ENCODE measurements at regions of chr7 and their contacts with region 1.

Region 1: GRCh38 chr7:4641667-4642467 is 40.2 kb upstream of the FOXK1 start:
- DNase-seq: peak; percentile 97
- H3K4me3 Mint-ChIP-seq: peak overlapping the region; percentile 90
- H3K27ac Mint-ChIP-seq: peak overlapping the region; percentile 76
- H3K4me1 Mint-ChIP-seq: no peaks in the 10 kb centered on the region
- H3K27me3 Mint-ChIP-seq: no peaks in the 10 kb centered on the region
- CTCF ChIP-seq: peak; percentile 20

Region 2: DNA sequence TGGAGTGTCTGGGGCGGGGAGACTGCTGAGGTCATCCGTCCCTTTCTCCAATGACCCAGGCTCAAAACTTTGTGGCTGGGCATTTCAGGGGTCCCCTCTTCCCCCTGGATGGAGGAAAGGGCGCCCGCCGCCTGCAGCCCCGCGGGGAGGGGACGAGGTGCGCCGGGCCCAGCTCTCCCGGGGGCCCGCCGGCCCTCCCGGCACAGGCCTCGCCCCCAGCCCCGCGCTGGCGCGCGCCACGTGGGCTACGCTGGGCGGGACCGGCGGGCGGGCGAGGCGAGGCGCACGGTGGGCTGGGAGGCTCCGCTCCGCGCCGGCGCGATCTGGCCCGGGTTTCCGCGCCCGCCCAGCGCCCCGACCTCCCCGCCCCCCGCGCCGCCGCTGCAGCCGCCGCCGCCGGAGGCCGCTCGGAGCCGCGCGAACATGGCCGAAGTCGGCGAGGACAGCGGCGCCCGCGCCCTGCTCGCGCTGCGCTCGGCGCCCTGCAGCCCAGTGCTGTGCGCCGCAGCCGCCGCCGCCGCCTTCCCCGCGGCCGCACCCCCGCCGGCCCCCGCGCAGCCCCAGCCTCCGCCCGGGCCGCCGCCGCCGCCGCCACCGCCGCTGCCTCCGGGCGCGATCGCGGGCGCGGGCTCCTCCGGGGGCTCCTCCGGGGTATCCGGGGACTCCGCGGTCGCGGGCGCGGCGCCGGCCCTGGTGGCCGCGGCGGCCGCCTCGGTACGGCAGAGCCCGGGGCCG is 40.2 kb after region 1 on chr7 and contains the start of gene FOXK1:
- CTCF ChIA-PET with region 1: interaction called, 17 read pairs
- intact Hi-C with region 1: loop called (anchors 1 kb)
- DNase-seq: peak; percentile 93
- H3K4me3 Mint-ChIP-seq: peak within 1 kb of the TSS; percentile 82
- H3K27ac Mint-ChIP-seq: peak within 1 kb of the TSS; percentile 89
- H3K4me1 Mint-ChIP-seq: peaks cover 13% of the 10 kb centered on the region
- H3K27me3 Mint-ChIP-seq: peaks cover 13% of the 10 kb centered on the region
- CTCF ChIP-seq: no peak
- total RNA-seq, gene FOXK1: 65.9 and 67.1 TPM in 2 replicates

Region 3: GRCh38 chr7:4744391-4745264 is 102.8 kb after region 1 on chr7:
- CTCF ChIA-PET with region 1: interaction called, 7 read pairs
- intact Hi-C with region 1: loop called (anchors 2 kb)
- DNase-seq: peak; percentile 100
- H3K4me3 Mint-ChIP-seq: peak overlapping the region; percentile 66
- H3K27ac Mint-ChIP-seq: peak overlapping the region; percentile 70
- H3K4me1 Mint-ChIP-seq: peaks cover 53% of the 10 kb centered on the region
- H3K27me3 Mint-ChIP-seq: no peaks in the 10 kb centered on the region
- CTCF ChIP-seq: no peak

Measured in Calu3 (cell line).